GM10248 (cell line): ENCODE measurements at regions of chr1 and their contacts with region 1.

Region 1: GRCh38 chr1:6554031-6554906 is at the start of gene NOL9:
- DNase-seq: peak; percentile 99
- CTCF ChIP-seq: peak; percentile 92

Region 2: DNA sequence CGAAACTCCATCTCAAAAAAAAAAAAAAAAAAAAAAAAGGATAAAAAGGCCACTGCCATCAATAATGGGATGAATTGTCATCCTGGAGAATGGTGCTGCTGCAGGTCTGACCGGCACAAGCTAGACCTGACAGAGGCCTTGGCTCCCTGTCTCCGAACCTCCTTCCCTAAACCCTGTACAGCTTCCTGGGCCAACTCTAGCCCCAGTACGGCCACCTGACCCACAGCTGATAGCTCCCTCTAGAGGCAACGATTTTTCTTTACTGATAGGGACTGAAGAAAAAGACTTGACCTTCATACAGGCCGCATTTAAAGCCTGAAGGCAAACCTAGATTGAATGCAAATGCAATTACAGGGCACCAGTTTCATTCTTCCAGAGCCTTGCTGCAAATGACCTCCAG is 30.7 kb before region 1 on chr1:
- CTCF ChIA-PET with region 1: interaction called, 10 read pairs
- POLR2A ChIA-PET with region 1: no interaction called
- DNase-seq: no peak
- CTCF ChIP-seq: no peak

Region 3: DNA sequence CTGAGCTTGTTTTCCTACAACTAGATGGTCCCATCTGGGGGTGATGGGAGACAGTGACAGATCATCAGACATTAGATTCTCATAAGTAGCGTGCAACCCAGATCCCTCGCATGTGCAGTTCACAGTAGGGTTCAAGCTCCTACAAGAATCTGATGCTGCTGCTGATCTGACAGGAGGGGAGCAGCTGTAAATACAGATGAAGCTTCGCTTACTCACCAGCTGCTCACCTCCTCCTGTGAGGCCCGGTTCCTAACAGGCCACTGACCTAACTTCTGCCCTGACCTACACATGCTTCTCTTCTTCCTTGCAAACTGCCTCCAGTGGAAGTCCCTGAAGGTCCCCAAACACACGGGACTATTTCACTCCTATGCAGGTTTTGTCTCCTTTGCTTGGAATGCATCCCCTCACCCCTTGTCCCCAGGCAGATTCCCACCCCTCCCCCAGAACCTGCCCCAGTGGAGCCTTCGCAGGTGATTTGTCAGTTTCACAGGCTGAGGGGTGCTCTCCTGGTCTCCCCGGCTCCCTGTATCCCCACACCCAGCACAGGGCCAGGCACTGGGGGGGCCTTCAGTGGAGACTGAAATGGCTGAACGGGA is 19.9 kb after region 1 on chr1:
- CTCF ChIA-PET with region 1: interaction called, 24 read pairs
- POLR2A ChIA-PET with region 1: no interaction called
- DNase-seq: no peak
- CTCF ChIP-seq: no peak

Region 4: GRCh38 chr1:6579374-6580118 is 25.3 kb after region 1 on chr1 and contains the start of gene ZBTB48:
- CTCF ChIA-PET with region 1: interaction called, 24 read pairs
- POLR2A ChIA-PET with region 1: interaction called, 3 read pairs
- DNase-seq: peak; percentile 100
- CTCF ChIP-seq: no peak

Region 5: GRCh38 chr1:6646499-6647148 is 92.4 kb after region 1 on chr1:
- CTCF ChIA-PET with region 1: interaction called, 13 read pairs
- POLR2A ChIA-PET with region 1: no interaction called
- DNase-seq: peak; percentile 63
- CTCF ChIP-seq: peak; percentile 37